ENCODE measurements at regions of chr6 and their contacts with region 1.

Region 1: DNA sequence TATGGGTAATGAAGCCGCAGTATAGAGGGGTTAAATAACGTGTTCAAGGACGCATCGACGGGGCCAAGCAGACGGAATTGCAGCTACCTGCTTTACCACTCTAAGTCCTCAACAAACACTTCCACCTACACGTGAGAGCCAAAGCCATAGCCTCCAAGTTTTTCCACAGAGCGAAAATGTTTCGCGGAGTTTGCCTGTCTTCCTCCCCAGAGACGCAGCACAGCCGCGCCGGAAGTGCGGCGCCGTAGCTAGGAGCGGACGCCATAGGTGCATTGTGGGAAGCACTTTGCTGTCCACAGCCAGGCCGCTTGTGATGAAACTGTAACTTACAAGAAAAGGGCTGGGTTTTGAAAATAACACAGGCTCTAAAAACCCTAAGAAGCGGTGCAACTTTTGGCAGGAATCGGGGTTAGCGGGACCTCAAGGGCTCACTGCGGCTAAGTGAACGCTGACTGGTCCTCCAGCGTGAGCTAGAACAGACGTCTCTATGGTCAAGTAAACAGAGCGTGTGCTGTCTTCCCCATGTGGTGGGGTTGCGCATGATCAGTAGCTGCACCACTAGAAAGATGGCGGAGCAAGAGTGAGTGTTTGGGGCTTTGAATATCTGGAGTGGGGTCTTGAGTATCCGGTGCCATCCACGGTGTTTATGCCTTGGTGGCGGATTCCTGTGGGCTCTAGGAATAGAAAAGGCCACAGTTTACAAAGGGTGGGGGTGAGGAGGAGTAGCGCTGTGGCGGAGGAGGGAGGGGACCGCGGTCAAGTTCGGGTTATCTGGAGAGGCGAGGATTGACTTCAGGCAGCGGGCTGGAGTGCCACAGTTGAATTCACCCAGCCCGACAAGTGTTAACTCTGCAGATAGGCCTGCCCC is at the start of gene RPL7L1:
- DNase-seq: peak; percentile 87
- ATAC-seq: peak; percentile 96
- H3K4me3 Mint-ChIP-seq: peak within 1 kb of the TSS; percentile 98
- H3K27ac Mint-ChIP-seq: peak within 1 kb of the TSS; percentile 100
- H3K4me1 Mint-ChIP-seq: peaks cover 18% of the 10 kb centered on the region
- H3K27me3 Mint-ChIP-seq: no peaks in the 10 kb centered on the region
- CTCF ChIP-seq: no peak
- total RNA-seq, gene RPL7L1: 135 to 137 TPM

Region 2: GRCh38 chr6:42661540-42662153 is 218.0 kb before region 1 on chr6:
- CTCF ChIA-PET with region 1: interaction called, 15 read pairs
- POLR2A ChIA-PET with region 1: interaction called, 3 read pairs
- intact Hi-C with region 1: loop called (anchors 5 kb)
- DNase-seq: peak; percentile 93
- ATAC-seq: peak; percentile 91
- H3K4me3 Mint-ChIP-seq: no peak overlapping the region
- H3K27ac Mint-ChIP-seq: peak overlapping the region; percentile 37
- H3K4me1 Mint-ChIP-seq: no peaks in the 10 kb centered on the region
- H3K27me3 Mint-ChIP-seq: no peaks in the 10 kb centered on the region
- CTCF ChIP-seq: peak; percentile 91

Region 3: DNA sequence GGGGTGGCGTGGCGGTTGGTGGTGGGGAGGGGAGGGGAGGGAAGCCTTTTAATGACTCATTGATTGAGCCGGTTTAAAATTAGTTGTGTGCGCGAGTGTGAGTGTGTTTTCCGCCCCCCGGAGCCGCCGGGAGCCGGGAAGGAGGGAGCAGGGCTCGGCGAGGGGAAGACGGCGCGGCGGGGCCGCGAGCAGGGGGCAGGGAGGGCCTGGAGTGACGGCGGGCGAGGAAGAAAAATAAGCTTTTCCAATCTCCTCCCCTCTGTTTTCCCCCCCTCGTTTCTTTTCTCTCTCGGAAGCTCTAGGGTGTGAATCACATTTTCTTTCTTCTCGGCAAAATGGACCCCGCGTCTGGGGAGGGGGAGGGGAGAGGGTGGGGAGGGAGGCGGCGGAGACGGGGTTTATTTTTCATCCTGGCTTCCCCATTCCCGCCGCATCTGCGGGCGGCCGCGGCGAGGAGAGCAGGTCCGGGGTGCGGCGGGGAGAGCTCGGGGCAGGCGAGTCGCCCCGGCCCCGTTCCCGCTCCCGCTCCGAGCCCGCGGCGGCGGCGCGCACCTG is 96.9 kb before region 1 on chr6:
- CTCF ChIA-PET with region 1: no interaction called
- POLR2A ChIA-PET with region 1: interaction called, 13 read pairs
- intact Hi-C with region 1: no loop called
- DNase-seq: peak; percentile 73
- ATAC-seq: peak; percentile 60
- H3K4me3 Mint-ChIP-seq: peak overlapping the region; percentile 75
- H3K27ac Mint-ChIP-seq: peak overlapping the region; percentile 100
- H3K4me1 Mint-ChIP-seq: peaks cover 35% of the 10 kb centered on the region
- H3K27me3 Mint-ChIP-seq: no peaks in the 10 kb centered on the region
- CTCF ChIP-seq: no peak

Region 4: DNA sequence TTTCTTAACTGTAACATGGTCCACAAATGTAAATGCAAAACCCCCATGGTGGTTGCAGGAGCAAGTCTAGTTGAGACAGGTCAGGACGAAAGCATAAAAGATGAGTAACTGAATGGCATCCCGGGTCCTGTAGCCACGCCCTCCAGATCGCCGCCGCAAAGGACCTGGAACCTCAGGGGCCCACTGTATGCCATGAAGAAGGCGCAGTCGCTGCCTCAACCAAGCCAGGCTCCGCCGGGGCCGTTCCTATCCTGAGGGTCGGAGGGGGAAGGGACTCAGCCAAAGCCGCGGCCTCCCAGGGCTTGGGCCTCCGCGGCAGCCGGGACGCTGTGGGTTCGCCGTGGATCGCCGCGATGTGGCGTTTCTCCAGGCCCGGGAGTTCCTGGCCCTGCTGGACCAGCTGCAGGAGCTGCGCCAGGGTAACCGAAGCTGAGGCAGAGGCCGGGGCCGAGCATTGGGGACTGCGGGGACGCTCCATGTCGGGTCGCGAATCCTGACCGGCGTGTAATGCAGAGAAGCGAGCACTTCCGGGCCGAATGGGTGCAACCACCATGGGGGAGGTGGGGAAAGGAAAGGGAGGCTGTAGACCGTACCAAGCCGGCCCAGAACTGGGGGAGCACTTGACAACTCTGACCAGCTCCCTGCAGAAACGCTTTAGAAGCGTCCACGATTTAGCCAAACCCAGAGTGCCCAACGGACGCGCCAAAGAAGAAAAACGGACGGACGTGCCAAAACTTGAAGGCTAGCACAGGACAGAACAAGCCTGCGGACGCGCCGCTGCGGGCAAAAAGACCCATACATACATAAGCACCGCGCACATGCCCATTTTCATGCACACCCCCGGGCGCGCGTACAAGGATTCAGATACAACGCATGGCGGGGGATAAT is 10.9 kb after region 1 on chr6:
- CTCF ChIA-PET with region 1: interaction called, 3 read pairs
- POLR2A ChIA-PET with region 1: interaction called, 50 read pairs
- intact Hi-C with region 1: no loop called
- DNase-seq: peak; percentile 96
- ATAC-seq: peak; percentile 93
- H3K4me3 Mint-ChIP-seq: peak overlapping the region; percentile 79
- H3K27ac Mint-ChIP-seq: peak overlapping the region; percentile 92
- H3K4me1 Mint-ChIP-seq: peaks cover 28% of the 10 kb centered on the region
- H3K27me3 Mint-ChIP-seq: no peaks in the 10 kb centered on the region
- CTCF ChIP-seq: no peak

Region 5: GRCh38 chr6:42988486-42989020 is 108.9 kb after region 1 on chr6:
- CTCF ChIA-PET with region 1: no interaction called
- POLR2A ChIA-PET with region 1: no interaction called
- intact Hi-C with region 1: no loop called
- DNase-seq: no peak
- ATAC-seq: no peak
- H3K4me3 Mint-ChIP-seq: no peak overlapping the region
- H3K27ac Mint-ChIP-seq: no peak overlapping the region
- H3K4me1 Mint-ChIP-seq: peaks cover 46% of the 10 kb centered on the region
- H3K27me3 Mint-ChIP-seq: no peaks in the 10 kb centered on the region
- CTCF ChIP-seq: no peak

Region 6: DNA sequence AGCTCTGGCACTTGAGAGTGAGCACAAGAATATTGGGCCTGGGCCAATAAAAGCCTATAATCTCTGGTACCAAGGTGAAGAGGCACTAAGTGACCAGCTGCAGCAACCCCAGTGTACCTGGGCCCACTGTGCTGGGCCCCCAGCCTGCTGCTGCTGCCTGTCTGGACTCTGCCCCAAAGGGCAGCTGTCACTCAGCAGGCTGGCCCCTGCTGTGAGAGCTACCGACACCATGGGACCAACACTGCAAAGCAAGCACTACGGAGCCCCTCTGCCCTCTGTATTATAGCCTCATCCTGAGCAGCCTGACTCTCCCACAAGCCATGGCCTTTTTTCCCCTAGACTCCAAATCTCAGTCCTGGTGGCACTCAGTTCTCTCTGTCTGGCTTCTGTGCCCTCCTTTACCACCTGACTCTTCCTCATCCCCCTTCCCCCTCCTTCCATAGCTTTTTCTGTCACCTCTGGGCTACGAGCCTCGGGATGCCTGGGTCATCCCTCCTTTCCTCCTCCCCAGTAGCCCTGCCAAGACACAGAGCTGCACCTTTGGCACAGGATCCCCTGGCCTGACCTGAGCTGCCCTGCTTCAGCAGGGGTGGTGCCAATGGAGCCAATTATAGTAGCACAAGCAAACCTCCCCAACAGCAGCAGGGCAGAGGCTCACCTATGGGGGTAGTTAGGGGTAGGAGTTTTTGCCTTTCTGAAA is 156.0 kb after region 1 on chr6:
- CTCF ChIA-PET with region 1: no interaction called
- POLR2A ChIA-PET with region 1: no interaction called
- intact Hi-C with region 1: no loop called
- DNase-seq: no peak
- ATAC-seq: no peak
- H3K4me3 Mint-ChIP-seq: no peak overlapping the region
- H3K27ac Mint-ChIP-seq: no peak overlapping the region
- H3K4me1 Mint-ChIP-seq: peaks cover 4% of the 10 kb centered on the region
- H3K27me3 Mint-ChIP-seq: no peaks in the 10 kb centered on the region
- CTCF ChIP-seq: no peak

Measured in activated CD8-positive, alpha-beta T cell treated with anti-CD3 and anti-CD28 coated beads for 36 hours (primary cell).